Caco-2 (cell line): ENCODE measurements at regions of chr5 and their contacts with region 1.

Region 1: DNA sequence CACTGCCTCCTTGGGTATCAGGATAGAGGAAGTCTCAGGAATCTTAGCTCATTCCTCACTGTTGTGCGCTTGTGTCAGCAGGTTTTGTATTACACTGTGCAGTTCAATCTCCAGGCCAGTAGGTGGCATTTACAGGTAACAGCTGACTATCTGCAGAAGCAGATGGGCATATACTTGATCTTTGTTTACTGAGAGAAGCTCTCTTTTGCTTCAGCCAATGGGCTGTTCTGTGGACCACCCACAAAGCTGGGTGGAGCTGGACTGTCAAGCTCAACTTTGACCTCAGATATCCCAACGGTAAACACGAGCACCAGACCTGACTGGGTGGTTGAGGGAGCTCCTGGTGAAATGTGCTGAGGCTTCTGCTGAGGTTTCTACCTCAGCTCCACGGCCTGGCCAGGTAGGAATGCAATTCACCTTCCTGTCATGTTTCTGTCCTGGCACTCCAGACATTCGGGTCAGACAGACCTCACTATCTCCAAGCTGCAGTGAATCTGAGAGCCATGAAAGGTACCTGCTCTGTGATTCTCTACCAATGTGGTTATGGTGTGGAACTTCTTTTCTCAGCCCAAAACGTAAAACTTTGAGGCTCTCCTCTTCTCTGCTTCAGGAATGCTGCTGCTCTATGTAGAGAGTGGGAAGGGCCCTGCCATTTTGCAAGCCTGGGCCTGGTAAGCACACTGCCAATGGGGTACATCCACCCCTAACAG is 167.9 kb upstream of the ACTBL2 start:
- DNase-seq: peak; percentile 84 to 89
- H3K4me3 ChIP-seq: peak overlapping the region; percentile 4; the same call in 1 of the 2 replicates
- H3K4me3 Mint-ChIP-seq: peak overlapping the region; percentile 30
- H3K27ac Mint-ChIP-seq: peak overlapping the region; percentile 0
- H3K4me1 ChIP-seq: peaks cover 9% of the 10 kb centered on the region
- H3K4me1 Mint-ChIP-seq: peaks cover 12% of the 10 kb centered on the region
- H3K27me3 ChIP-seq: no peaks in the 10 kb centered on the region; the same call in 1 of the 2 replicates
- H3K27me3 Mint-ChIP-seq: no peaks in the 10 kb centered on the region
- CTCF ChIP-seq: peak; percentile 74 to 76

Region 2: GRCh38 chr5:57298295-57298984 is 352.1 kb before region 1 on chr5:
- CTCF ChIA-PET with region 1: interaction called, 23 read pairs
- POLR2A ChIA-PET with region 1: no interaction called
- intact Hi-C with region 1: loop called (anchors 2 kb)
- DNase-seq: peak; percentile 84 to 89
- H3K4me3 ChIP-seq: no peak overlapping the region
- H3K4me3 Mint-ChIP-seq: peak overlapping the region; percentile 53
- H3K27ac Mint-ChIP-seq: no peak overlapping the region
- H3K4me1 ChIP-seq: peaks cover 10% of the 10 kb centered on the region
- H3K4me1 Mint-ChIP-seq: peaks cover 10% of the 10 kb centered on the region
- H3K27me3 ChIP-seq: no peaks in the 10 kb centered on the region
- H3K27me3 Mint-ChIP-seq: no peaks in the 10 kb centered on the region
- CTCF ChIP-seq: peak; percentile 74 to 79

Region 3: GRCh38 chr5:57618767-57619381 is 31.6 kb before region 1 on chr5:
- CTCF ChIA-PET with region 1: no interaction called
- POLR2A ChIA-PET with region 1: no interaction called
- intact Hi-C with region 1: no loop called
- DNase-seq: no peak
- H3K4me3 ChIP-seq: no peak overlapping the region
- H3K4me3 Mint-ChIP-seq: no peak overlapping the region
- H3K27ac Mint-ChIP-seq: no peak overlapping the region
- H3K4me1 ChIP-seq: no peaks in the 10 kb centered on the region
- H3K4me1 Mint-ChIP-seq: no peaks in the 10 kb centered on the region
- H3K27me3 ChIP-seq: no peaks in the 10 kb centered on the region
- H3K27me3 Mint-ChIP-seq: peaks cover 27% of the 10 kb centered on the region
- CTCF ChIP-seq: no peak

Region 4: DNA sequence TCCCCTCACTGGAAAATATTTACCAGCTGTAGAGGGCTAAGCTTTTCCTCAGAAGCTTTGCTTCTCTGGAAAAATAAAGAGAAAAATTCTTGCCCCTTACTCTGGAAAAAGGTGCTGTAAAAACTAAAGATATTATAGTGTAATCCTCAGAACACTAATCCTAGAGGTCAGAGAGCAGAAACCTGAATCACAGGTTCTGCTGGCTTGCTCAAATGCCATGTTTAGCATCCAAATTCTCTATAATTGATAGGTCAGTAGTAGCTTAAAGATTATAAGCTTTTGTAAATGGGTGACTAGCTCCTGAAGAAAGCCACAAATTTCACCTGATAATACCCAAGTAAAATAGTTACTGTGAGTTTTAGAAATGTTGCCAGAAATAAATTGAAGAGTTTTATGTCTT is 17.9 kb after region 1 on chr5:
- CTCF ChIA-PET with region 1: interaction called, 13 read pairs
- POLR2A ChIA-PET with region 1: no interaction called
- intact Hi-C with region 1: no loop called
- DNase-seq: peak in 1 of 2 experiments; percentile 12
- H3K4me3 ChIP-seq: no peak overlapping the region
- H3K4me3 Mint-ChIP-seq: no peak overlapping the region
- H3K27ac Mint-ChIP-seq: no peak overlapping the region
- H3K4me1 ChIP-seq: no peaks in the 10 kb centered on the region; the same call in 1 of the 2 replicates
- H3K4me1 Mint-ChIP-seq: peaks cover 6% of the 10 kb centered on the region
- H3K27me3 ChIP-seq: no peaks in the 10 kb centered on the region
- H3K27me3 Mint-ChIP-seq: no peaks in the 10 kb centered on the region
- CTCF ChIP-seq: no peak

Region 5: GRCh38 chr5:57736716-57737115 is 86.2 kb after region 1 on chr5:
- CTCF ChIA-PET with region 1: interaction called, 10 read pairs
- POLR2A ChIA-PET with region 1: no interaction called
- intact Hi-C with region 1: loop called (anchors 1 kb)
- DNase-seq: no peak
- H3K4me3 ChIP-seq: no peak overlapping the region
- H3K4me3 Mint-ChIP-seq: no peak overlapping the region
- H3K27ac Mint-ChIP-seq: peak overlapping the region; percentile 92
- H3K4me1 ChIP-seq: peaks cover 55% of the 10 kb centered on the region
- H3K4me1 Mint-ChIP-seq: peaks cover 34% of the 10 kb centered on the region
- H3K27me3 ChIP-seq: no peaks in the 10 kb centered on the region
- H3K27me3 Mint-ChIP-seq: no peaks in the 10 kb centered on the region
- CTCF ChIP-seq: no peak

Region 6: GRCh38 chr5:57764479-57765089 is 114.1 kb after region 1 on chr5:
- CTCF ChIA-PET with region 1: interaction called, 7 read pairs
- POLR2A ChIA-PET with region 1: no interaction called
- intact Hi-C with region 1: loop called (anchors 2 kb)
- DNase-seq: no peak
- H3K4me3 ChIP-seq: no peak overlapping the region
- H3K4me3 Mint-ChIP-seq: no peak overlapping the region
- H3K27ac Mint-ChIP-seq: no peak overlapping the region
- H3K4me1 ChIP-seq: no peaks in the 10 kb centered on the region
- H3K4me1 Mint-ChIP-seq: no peaks in the 10 kb centered on the region
- H3K27me3 ChIP-seq: no peaks in the 10 kb centered on the region
- H3K27me3 Mint-ChIP-seq: no peaks in the 10 kb centered on the region
- CTCF ChIP-seq: no peak

Region 7: DNA sequence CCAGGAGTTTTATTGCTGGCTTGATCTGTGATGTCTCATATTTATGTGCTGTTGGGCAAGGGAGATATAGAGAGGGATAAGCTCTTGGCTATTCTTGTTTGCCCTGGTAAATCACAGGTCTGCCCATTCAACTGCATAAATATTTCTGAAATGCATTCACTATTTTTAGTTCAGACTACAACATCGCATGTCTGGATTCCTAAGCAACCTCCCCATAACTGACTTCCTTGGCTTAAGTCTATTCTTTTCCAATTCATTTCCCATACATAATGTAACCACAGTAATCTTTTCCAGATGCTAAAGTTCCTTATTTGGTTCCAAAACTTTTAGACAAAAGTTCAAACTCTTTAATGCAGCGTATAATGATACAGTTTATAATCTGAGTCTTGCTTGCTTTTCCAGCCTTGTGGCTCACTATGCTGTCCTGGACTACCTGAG is 153.5 kb after region 1 on chr5:
- CTCF ChIA-PET with region 1: no interaction called
- POLR2A ChIA-PET with region 1: no interaction called
- intact Hi-C with region 1: no loop called
- DNase-seq: no peak
- H3K4me3 ChIP-seq: no peak overlapping the region
- H3K4me3 Mint-ChIP-seq: no peak overlapping the region
- H3K27ac Mint-ChIP-seq: no peak overlapping the region
- H3K4me1 ChIP-seq: no peaks in the 10 kb centered on the region
- H3K4me1 Mint-ChIP-seq: no peaks in the 10 kb centered on the region
- H3K27me3 ChIP-seq: no peaks in the 10 kb centered on the region; the same call in 1 of the 2 replicates
- H3K27me3 Mint-ChIP-seq: peaks cover 10% of the 10 kb centered on the region
- CTCF ChIP-seq: no peak

Region 8: GRCh38 chr5:57862457-57862911 is 212.0 kb after region 1 on chr5:
- CTCF ChIA-PET with region 1: no interaction called
- POLR2A ChIA-PET with region 1: no interaction called
- intact Hi-C with region 1: loop called (anchors 5 kb)
- DNase-seq: peak; percentile 35 to 37
- H3K4me3 ChIP-seq: no peak overlapping the region
- H3K4me3 Mint-ChIP-seq: no peak overlapping the region
- H3K27ac Mint-ChIP-seq: no peak overlapping the region
- H3K4me1 ChIP-seq: peaks cover 9% of the 10 kb centered on the region; the same call in 1 of the 2 replicates
- H3K4me1 Mint-ChIP-seq: no peaks in the 10 kb centered on the region
- H3K27me3 ChIP-seq: no peaks in the 10 kb centered on the region
- H3K27me3 Mint-ChIP-seq: no peaks in the 10 kb centered on the region
- CTCF ChIP-seq: no peak